ENCODE measurements at regions of chr18 and their contacts with region 1.

Region 1: DNA sequence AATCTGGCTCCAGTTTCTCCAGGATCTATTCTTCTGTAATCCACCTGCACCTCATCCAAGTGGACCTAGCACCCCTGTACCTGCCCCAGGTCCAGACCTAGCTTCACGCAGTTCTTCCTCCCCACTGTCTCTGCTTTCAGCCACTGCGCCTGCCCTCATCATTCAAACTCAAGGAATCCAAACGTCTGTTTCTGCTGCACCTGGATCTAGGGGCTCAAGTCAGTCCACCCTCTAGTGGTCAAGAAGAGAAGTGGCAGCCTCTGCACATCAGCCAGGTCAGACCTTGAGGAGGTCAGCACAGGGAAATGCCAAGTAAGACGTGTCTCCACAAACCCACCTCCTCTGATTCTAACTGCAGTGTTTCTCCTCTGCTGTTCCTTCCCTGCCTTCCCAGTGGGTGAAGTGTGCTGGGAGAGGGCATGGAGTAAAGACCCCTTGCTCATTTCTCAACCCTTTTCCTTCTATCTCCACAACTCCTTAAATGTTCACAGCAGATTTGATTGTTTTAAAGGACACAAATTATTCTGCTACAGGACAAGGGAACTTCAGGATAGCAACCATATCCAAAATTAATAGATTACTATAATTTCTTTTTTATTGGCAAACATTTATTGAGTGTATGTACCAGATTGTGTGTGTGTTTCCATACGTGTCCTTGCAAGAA is 8.6 kb upstream of the RNF152 start:
- DNase-seq: peak; percentile 73
- H3K4me3 ChIP-seq: no peak overlapping the region; a peak in 1 of 4 replicates
- H3K27ac ChIP-seq: no peak overlapping the region
- H3K4me1 ChIP-seq: peaks cover 0 to 7% of the 10 kb centered on the region in 2 experiments; a peak in 2 of 4 replicates
- H3K27me3 ChIP-seq: no peaks in the 10 kb centered on the region
- CTCF ChIP-seq: peak; percentile 89
- EP300 ChIP-seq: no peak
- RAD21 ChIP-seq: peak; percentile 82

Region 2: DNA sequence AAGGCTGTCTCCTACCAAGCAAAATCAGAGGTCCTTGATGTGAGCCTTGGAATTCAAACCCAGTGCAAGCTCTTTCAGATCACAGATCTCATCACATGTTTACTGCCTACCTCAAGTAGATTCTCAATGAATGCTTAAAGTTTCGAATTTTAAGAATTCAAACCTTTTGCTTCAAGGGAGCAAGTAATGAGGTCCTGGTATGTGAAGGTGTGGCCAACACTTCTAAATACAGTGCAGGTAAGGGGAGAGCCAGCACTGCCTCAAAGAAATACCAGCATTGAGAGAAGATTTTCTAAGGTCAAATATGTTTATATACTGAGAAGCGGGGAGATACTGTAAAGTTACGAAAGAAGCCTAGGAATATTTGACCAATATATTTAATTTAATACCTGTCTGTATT is 11.0 kb after region 1 on chr18:
- CTCF ChIA-PET with region 1: interaction called, 18 read pairs
- POLR2A ChIA-PET with region 1: no interaction called
- DNase-seq: no peak
- H3K4me3 ChIP-seq: no peak overlapping the region
- H3K27ac ChIP-seq: no peak overlapping the region
- H3K4me1 ChIP-seq: peaks cover 0 to 5% of the 10 kb centered on the region in 2 experiments; a peak in 1 of 4 replicates
- H3K27me3 ChIP-seq: no peaks in the 10 kb centered on the region
- CTCF ChIP-seq: no peak
- EP300 ChIP-seq: no peak
- RAD21 ChIP-seq: no peak

Region 3: GRCh38 chr18:62030091-62030985 is 128.9 kb after region 1 on chr18:
- CTCF ChIA-PET with region 1: no interaction called
- POLR2A ChIA-PET with region 1: no interaction called
- DNase-seq: peak; percentile 10
- H3K4me3 ChIP-seq: no peak overlapping the region
- H3K27ac ChIP-seq: peak overlapping the region; percentile 42 to 60; a peak in 2 of 4 replicates
- H3K4me1 ChIP-seq: peaks cover 0 to 6% of the 10 kb centered on the region in 2 experiments; a peak in 1 of 4 replicates
- H3K27me3 ChIP-seq: no peaks in the 10 kb centered on the region
- CTCF ChIP-seq: no peak
- EP300 ChIP-seq: 0 out of 4 replicates have a peak, but pooled peaks of 1 of the 2 experiments have one; percentile 13
- RAD21 ChIP-seq: no peak

Region 4: DNA sequence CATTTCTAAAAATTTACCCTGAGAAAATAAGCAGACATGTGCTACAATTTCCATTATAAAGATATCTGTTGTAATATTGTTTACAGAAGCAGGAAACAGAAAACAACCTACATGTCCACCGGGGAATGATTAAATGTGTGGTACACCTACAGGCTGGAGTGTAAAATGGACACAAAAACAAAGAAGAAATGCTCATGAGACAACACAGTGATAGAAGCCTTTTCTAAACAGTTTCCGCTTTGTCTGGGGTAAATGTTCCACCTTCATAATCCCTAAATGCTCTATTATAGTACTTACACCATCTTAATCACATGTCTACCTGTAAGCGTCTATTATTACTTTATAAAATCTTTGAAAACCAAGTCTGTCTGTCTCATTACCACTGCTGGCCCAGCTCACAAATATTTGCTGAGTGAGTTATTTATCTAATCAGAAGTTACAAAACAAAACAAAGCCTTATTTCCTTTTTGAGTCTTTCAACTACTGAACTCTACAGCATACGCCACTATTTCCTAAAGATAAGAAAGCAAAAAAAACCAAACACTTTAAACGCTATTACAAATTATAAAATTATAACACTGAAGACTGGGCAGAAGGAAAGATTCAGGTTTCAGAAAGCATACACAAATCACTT is 190.1 kb after region 1 on chr18:
- CTCF ChIA-PET with region 1: no interaction called
- POLR2A ChIA-PET with region 1: no interaction called
- DNase-seq: no peak
- H3K4me3 ChIP-seq: no peak overlapping the region
- H3K27ac ChIP-seq: no peak overlapping the region
- H3K4me1 ChIP-seq: no peaks in the 10 kb centered on the region
- H3K27me3 ChIP-seq: no peaks in the 10 kb centered on the region
- CTCF ChIP-seq: no peak
- EP300 ChIP-seq: no peak
- RAD21 ChIP-seq: no peak